ENCODE measurements at regions of chr20 and their contacts with region 1.

Region 1: DNA sequence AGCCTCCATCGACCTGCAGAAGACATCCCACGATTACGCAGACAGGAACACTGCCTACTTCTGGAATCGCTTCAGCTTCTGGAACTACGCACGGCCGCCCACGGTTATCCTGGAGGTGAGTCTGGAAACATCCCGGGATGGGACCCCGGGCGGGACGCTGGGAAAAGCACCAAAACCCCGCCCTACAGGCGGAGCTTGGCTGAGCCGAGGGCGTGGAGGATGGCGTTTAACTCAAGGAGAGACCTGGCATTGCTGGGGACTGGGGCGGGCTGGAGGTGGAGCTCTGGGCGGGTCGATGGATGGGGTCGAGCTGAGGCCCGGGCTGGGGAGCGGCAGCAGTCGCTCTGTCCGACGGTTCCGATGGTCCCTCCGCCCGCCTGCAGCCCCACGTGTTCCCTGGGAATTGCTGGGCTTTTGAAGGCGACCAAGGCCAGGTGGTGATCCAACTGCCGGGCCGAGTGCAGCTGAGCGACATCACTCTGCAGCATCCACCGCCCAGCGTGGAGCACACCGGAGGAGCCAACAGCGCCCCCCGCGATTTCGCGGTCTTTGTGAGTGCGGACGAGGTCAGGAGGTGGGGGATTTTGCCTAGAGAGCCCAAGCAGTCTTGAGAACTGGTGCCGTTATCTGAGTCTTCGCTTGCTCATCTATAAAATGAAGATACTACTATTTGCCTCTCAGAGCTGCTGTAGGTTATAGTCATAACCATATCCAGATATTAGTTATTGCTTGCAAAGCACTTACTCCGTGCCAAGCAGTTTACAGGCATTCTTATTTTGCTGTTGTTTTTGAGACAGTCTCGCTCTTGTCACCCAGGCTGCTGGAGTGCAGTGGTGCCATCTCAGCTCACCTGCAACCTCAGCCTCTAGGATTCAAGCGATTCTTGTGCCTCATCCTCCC is 3.8 kb downstream of the SPAG4 start:
- DNase-seq: peak; percentile 71 to 90
- ATAC-seq: peak; percentile 18 to 22 (median 22)
- H3K4me3 ChIP-seq: peak overlapping the region; percentile 44
- H3K4me3 Mint-ChIP-seq: peak overlapping the region; percentile 86
- H3K27ac ChIP-seq: no peak overlapping the region
- H3K27ac Mint-ChIP-seq: peak overlapping the region; percentile 34 to 99
- H3K4me1 ChIP-seq: peaks cover 40% of the 10 kb centered on the region
- H3K4me1 Mint-ChIP-seq: peaks cover 23 to 45% of the 10 kb centered on the region in 2 donors
- H3K27me3 ChIP-seq: peaks cover 10% of the 10 kb centered on the region
- H3K27me3 Mint-ChIP-seq: peaks cover 0 to 2% of the 10 kb centered on the region in 2 donors
- CTCF ChIP-seq: peak; percentile 55

Region 2: GRCh38 chr20:35463455-35464300 is 155.8 kb before region 1 on chr20:
- intact Hi-C with region 1: loop called (anchors 10 kb)
- DNase-seq: peak; percentile 25 to 82
- ATAC-seq: peak; percentile 84 to 98 (median 92)
- H3K4me3 ChIP-seq: no peak overlapping the region
- H3K4me3 Mint-ChIP-seq: no peak overlapping the region
- H3K27ac ChIP-seq: no peak overlapping the region
- H3K27ac Mint-ChIP-seq: peak overlapping the region in 1 of 2 donors; percentile 21
- H3K4me1 ChIP-seq: no peaks in the 10 kb centered on the region
- H3K4me1 Mint-ChIP-seq: peaks cover 0 to 16% of the 10 kb centered on the region in 2 donors
- H3K27me3 ChIP-seq: no peaks in the 10 kb centered on the region
- H3K27me3 Mint-ChIP-seq: no peaks in the 10 kb centered on the region
- CTCF ChIP-seq: peak; percentile 83

Region 3: DNA sequence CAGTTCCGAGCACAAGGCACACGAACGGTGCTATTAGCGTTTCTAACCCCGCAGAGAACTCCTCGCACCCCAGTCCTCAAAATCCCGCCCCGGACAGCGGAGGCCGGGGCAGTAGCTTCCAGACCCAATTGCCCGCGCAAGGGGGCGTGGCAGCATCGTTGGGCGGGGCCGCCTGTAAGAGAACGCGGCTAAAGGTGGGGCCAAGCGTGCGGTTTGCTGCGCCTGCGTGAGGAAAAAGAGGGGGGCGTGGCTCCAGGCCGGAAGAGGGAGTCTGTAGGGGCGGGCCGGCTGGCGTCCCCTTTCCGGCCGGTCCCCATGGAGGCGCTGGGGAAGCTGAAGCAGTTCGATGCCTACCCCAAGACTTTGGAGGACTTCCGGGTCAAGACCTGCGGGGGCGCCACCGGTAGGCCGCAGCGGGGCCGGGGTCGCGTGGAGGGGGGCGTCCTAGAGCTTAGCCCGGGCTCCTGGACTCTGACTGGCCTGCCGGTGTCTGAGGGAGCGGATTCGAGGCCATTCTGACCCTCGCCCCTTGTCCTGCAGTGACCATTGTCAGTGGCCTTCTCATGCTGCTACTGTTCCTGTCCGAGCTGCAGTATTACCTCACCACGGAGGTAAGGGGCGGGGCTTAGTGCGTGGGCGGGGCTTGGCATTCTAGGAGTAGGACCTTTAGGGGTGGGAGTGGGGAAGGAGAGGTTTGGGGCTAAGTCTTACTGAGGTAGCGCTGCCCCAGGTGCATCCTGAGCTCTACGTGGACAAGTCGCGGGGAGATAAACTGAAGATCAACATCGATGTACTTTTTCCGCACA is 77.5 kb before region 1 on chr20 and contains the start of gene ERGIC3:
- intact Hi-C with region 1: loop called (anchors 5 kb)
- DNase-seq: peak; percentile 96 to 98
- ATAC-seq: peak; percentile 95 to 99 (median 96)
- H3K4me3 ChIP-seq: peak within 1 kb of the TSS; percentile 95
- H3K4me3 Mint-ChIP-seq: peak within 1 kb of the TSS; percentile 92
- H3K27ac ChIP-seq: peak within 1 kb of the TSS; percentile 89
- H3K27ac Mint-ChIP-seq: peak within 1 kb of the TSS; percentile 77 to 92
- H3K4me1 ChIP-seq: peaks cover 16% of the 10 kb centered on the region
- H3K4me1 Mint-ChIP-seq: peaks cover 9 to 15% of the 10 kb centered on the region in 2 donors
- H3K27me3 ChIP-seq: no peaks in the 10 kb centered on the region
- H3K27me3 Mint-ChIP-seq: no peaks in the 10 kb centered on the region
- CTCF ChIP-seq: no peak
- total RNA-seq, gene ERGIC3: 128 to 130 (median 129) TPM

Region 4: GRCh38 chr20:35664544-35665221 is 45.2 kb after region 1 on chr20 and contains the starts of genes CPNE1 and RBM12:
- intact Hi-C with region 1: loop called (anchors 1 kb)
- DNase-seq: peak; percentile 93 to 98
- ATAC-seq: peak; percentile 68 to 87 (median 80)
- H3K4me3 ChIP-seq: peak within 1 kb of the TSS; percentile 81
- H3K4me3 Mint-ChIP-seq: peak within 1 kb of the TSS; percentile 96
- H3K27ac ChIP-seq: peak within 1 kb of the TSS; percentile 97
- H3K27ac Mint-ChIP-seq: peak within 1 kb of the TSS in 1 of 2 donors; percentile 100
- H3K4me1 ChIP-seq: peaks cover 22% of the 10 kb centered on the region
- H3K4me1 Mint-ChIP-seq: peaks cover 55% of the 10 kb centered on the region in 2 donors
- H3K27me3 ChIP-seq: no peaks in the 10 kb centered on the region
- H3K27me3 Mint-ChIP-seq: no peaks in the 10 kb centered on the region
- CTCF ChIP-seq: no peak
- total RNA-seq, gene CPNE1: 298 to 342 (median 334) TPM
- total RNA-seq, gene RBM12: 80.9 to 112 (median 89.4) TPM

Region 5: GRCh38 chr20:36214684-36215256 is 595.3 kb after region 1 on chr20:
- intact Hi-C with region 1: no loop called
- DNase-seq: peak in 1 of 2 donors; percentile 47
- ATAC-seq: peak in 2 of 3 donors; percentile 47 to 54
- H3K4me3 ChIP-seq: no peak overlapping the region
- H3K4me3 Mint-ChIP-seq: no peak overlapping the region
- H3K27ac ChIP-seq: no peak overlapping the region
- H3K27ac Mint-ChIP-seq: no peak overlapping the region
- H3K4me1 ChIP-seq: no peaks in the 10 kb centered on the region
- H3K4me1 Mint-ChIP-seq: peaks cover 4 to 9% of the 10 kb centered on the region in 2 donors
- H3K27me3 ChIP-seq: no peaks in the 10 kb centered on the region
- H3K27me3 Mint-ChIP-seq: peaks cover 0 to 9% of the 10 kb centered on the region in 2 donors
- CTCF ChIP-seq: no peak